ENCODE measurements at regions of chr6 and their contacts with region 1.

Region 1: GRCh38 chr6:41334482-41335040 is 847 bp upstream of the NCR2 start:
- DNase-seq: no peak
- H3K4me3 ChIP-seq: no peak overlapping the region
- H3K27ac ChIP-seq: no peak overlapping the region
- H3K4me1 ChIP-seq: peaks cover 0 to 5% (median 0%) of the 10 kb centered on the region in 4 experiments; a peak in 1 of 7 replicates
- H3K27me3 ChIP-seq: 0 out of 7 replicates have a peak, but pooled peaks cover 0 to 2% (median 0%) of the 10 kb centered on the region in 4 experiments
- CTCF ChIP-seq: peak; percentile 23 to 43 (median 30)
- EP300 ChIP-seq: no peak
- POLR2A ChIP-seq: no peak
- RAD21 ChIP-seq: peak; percentile 25 to 47; a peak in 3 of 4 replicates

Region 2: GRCh38 chr6:41228616-41229015 is 105.9 kb before region 1 on chr6:
- CTCF ChIA-PET with region 1: interaction called, 13 read pairs
- POLR2A ChIA-PET with region 1: no interaction called
- DNase-seq: peak in 1 of 2 experiments; percentile 53
- H3K4me3 ChIP-seq: no peak overlapping the region
- H3K27ac ChIP-seq: no peak overlapping the region
- H3K4me1 ChIP-seq: no peaks in the 10 kb centered on the region
- H3K27me3 ChIP-seq: no peaks in the 10 kb centered on the region; a peak in 1 of 7 replicates
- CTCF ChIP-seq: peak; percentile 63 to 72 (median 66)
- EP300 ChIP-seq: no peak
- POLR2A ChIP-seq: no peak
- RAD21 ChIP-seq: peak; percentile 72 to 81

Region 3: DNA sequence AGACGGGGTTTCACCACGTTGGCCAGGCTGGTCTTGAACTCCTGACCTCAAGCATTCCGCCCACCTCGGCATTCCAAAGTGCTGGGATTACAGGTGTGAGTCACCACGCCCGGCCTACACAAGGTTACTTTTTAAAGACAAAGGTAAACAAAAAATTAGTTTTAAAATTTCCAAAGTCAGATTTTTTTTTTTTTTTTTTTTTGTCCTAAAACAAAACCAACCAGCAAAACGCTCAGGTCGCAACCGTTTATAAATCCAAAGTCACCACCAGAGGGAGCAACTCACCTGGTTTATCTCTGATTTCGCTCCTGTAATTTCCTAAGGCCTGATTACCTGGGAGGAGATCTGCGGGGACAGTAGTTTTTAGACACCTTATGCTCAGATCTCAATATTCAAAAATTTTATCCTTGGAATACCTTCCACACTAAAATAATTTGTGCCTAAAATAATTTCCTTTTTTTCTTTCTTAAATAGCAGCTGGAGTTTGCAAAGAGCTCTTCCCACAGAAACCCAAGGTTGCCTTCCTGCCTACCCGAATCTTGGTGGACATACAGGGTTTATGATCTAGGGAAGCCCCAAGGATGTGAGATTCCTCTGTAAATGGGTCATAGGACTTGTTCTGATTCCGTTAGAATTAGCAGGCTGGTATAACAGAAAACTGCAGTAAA is 28.2 kb before region 1 on chr6:
- CTCF ChIA-PET with region 1: interaction called, 32 read pairs
- POLR2A ChIA-PET with region 1: no interaction called
- DNase-seq: no peak
- H3K4me3 ChIP-seq: no peak overlapping the region
- H3K27ac ChIP-seq: no peak overlapping the region
- H3K4me1 ChIP-seq: peaks cover 0 to 3% (median 0%) of the 10 kb centered on the region in 4 experiments; a peak in 1 of 7 replicates
- H3K27me3 ChIP-seq: no peaks in the 10 kb centered on the region; a peak in 1 of 7 replicates
- CTCF ChIP-seq: peak in 2 of 3 experiments; percentile 63 to 67; a peak in 3 of 4 replicates
- EP300 ChIP-seq: no peak
- POLR2A ChIP-seq: no peak
- RAD21 ChIP-seq: peak; percentile 57 to 72

Region 4: GRCh38 chr6:41344876-41345275 is 10.3 kb after region 1 on chr6:
- CTCF ChIA-PET with region 1: interaction called, 10 read pairs
- POLR2A ChIA-PET with region 1: no interaction called
- DNase-seq: peak in 1 of 2 experiments; percentile 23
- H3K4me3 ChIP-seq: no peak overlapping the region
- H3K27ac ChIP-seq: no peak overlapping the region
- H3K4me1 ChIP-seq: 0 out of 7 replicates have a peak, but pooled peaks cover 0 to 2% (median 0%) of the 10 kb centered on the region in 4 experiments
- H3K27me3 ChIP-seq: no peaks in the 10 kb centered on the region; a peak in 3 of 7 replicates
- CTCF ChIP-seq: no peak
- EP300 ChIP-seq: no peak
- POLR2A ChIP-seq: no peak
- RAD21 ChIP-seq: no peak

Measured in H1 (cell line).